ENCODE measurements at regions of chr9 and their contacts with region 1.

Region 1: GRCh38 chr9:5557606-5558587 is 47.6 kb downstream of the PDCD1LG2 start:
- DNase-seq: peak; percentile 91
- H3K4me3 Mint-ChIP-seq: peak overlapping the region; percentile 70
- H3K27ac Mint-ChIP-seq: peak overlapping the region; percentile 94
- H3K4me1 Mint-ChIP-seq: peaks cover 39% of the 10 kb centered on the region
- H3K27me3 Mint-ChIP-seq: no peaks in the 10 kb centered on the region

Region 2: DNA sequence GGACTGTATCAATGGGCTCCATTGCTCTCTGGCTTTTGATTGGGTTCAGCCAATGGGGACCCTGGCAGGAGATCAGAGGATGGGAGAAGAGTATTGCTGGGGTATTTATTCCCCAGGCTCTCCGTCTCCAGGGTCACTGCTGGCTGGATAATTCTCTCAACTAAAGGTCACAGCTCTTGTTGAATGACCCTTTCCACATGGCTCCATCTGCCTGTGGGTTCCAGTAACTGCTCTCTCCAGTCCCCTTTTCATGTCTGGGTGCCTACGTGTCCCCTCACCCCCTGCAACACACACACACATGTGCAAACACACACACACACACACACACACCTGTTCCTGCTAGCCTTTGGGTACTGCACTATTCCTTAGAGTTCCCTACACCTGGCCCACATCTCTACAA is 17.1 kb after region 1 on chr9:
- intact Hi-C with region 1: loop called (anchors 2 kb)
- DNase-seq: no peak
- H3K4me3 Mint-ChIP-seq: no peak overlapping the region
- H3K27ac Mint-ChIP-seq: no peak overlapping the region
- H3K4me1 Mint-ChIP-seq: peaks cover 20% of the 10 kb centered on the region
- H3K27me3 Mint-ChIP-seq: no peaks in the 10 kb centered on the region

Region 3: DNA sequence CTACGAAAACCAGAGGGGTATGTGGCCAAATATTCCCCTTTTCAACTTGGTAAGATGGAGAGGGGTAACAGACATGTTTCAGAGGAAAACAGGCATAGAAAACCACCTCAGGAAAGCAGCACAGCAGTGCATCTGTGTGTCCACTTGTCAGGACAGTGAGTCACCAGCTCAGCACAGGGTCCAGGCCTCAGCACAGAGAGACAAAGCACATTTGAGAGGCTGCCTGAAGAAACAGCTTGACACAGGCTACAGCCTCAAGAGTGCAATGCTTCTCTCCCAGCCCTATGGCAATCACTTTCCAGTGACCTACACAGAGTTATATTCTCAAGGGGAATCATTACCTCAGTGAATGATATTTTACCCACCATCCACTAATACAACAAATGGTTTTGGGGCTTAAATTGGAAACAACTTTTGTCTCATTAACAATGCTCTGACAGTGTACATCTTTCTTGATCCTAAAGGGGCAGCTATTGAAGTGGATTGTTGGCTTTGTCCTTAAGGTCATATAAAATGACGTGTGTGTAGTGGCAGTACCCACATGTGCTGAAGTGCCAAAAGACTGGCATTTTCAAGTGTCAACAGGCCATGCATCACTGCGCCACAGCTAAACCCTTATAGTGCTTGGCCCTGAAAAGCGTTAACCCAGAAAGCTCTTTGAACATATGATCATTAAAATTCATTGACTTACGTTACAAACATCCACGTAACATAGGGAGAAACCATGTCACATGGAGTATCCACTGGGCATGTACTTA is 228.7 kb after region 1 on chr9:
- intact Hi-C with region 1: no loop called
- DNase-seq: no peak
- H3K4me3 Mint-ChIP-seq: no peak overlapping the region
- H3K27ac Mint-ChIP-seq: peak overlapping the region; percentile 6
- H3K4me1 Mint-ChIP-seq: peaks cover 30% of the 10 kb centered on the region
- H3K27me3 Mint-ChIP-seq: no peaks in the 10 kb centered on the region

Measured in activated CD4-positive, alpha-beta T cell treated with anti-CD3 and anti-CD28 coated beads, Interleukin-2, amount 10 ng/mL, durations not matched to agents 24 days and 14 days (primary cell).